ENCODE measurements at regions of chr1 and their contacts with region 1.

Region 1: DNA sequence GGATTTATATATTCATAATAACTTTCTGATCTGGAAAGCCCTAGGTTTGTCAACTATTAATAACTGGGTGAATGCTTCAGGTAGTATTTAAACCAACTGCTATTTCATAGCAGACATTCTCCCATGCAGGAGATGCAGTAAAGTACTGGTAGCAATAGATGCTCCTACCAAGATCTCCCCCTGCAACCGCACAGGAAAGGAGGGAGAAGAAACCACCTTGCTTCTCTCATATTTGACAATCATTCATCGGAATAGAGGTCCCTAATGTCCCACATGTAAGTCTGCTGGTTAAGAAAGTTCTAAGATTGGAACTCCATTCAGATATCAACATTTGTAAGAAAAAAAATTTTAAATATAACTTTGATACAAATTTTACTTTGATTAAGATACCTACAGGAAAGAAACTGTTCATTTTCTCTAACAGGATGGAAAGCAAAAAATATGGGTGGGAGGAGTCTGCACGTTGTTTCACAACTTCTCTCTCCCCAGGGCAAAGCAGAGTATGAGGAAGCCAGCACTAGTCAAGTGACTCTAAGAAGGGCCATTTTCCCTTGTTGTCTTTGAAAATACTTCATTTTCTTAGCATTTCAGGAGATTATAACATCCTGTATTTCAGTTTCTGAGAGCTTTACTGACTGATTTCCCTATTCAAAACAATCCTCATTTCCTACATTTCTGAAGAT is at the start of gene PYHIN1:
- DNase-seq: peak; percentile 37
- H3K4me3 Mint-ChIP-seq: peak within 1 kb of the TSS; percentile 75
- H3K27ac Mint-ChIP-seq: peak within 1 kb of the TSS; percentile 86
- H3K4me1 Mint-ChIP-seq: peaks cover 35% of the 10 kb centered on the region
- H3K27me3 Mint-ChIP-seq: peaks cover 6% of the 10 kb centered on the region
- total RNA-seq, gene PYHIN1: 4.1 to 4.4 TPM

Region 2: DNA sequence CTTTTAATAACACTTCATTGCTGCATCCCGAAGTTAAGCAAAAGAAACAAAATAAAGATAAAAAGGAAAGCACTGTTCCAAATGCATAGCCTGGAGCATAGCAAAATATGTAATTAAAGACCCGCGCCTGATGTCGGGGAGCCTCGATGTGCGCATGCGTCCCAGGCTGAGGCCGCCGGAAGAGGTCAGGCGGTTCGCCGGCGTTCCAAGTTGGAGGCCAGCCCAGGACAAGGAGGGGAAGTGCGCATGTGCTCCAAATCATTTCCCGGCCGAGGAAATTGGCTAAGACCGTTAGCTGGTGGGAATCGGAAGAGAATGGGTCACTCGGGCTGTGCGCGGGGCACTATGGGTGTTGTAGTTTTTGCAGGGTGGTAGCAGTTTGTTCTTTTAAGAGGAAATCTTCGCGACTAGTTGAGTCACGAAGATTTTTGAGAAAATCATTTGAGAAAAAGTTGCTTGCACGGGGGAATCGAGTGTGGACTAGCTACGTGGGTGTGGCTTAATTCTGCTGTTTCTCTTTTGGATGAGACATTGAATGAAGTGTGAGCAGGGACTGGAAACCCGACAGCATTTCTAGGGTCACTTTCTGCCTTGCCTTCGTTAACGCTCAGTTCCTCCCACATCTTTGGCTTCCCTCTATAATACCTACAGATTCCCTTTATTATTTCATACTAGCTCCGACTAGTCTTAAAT is 781.5 kb before region 1 on chr1:
- CTCF ChIA-PET with region 1: no interaction called
- intact Hi-C with region 1: loop called (anchors 5 kb)
- DNase-seq: peak; percentile 84
- H3K4me3 Mint-ChIP-seq: peak overlapping the region; percentile 77
- H3K27ac Mint-ChIP-seq: peak overlapping the region; percentile 77
- H3K4me1 Mint-ChIP-seq: peaks cover 19% of the 10 kb centered on the region
- H3K27me3 Mint-ChIP-seq: no peaks in the 10 kb centered on the region

Region 3: GRCh38 chr1:158809862-158810261 is 121.3 kb before region 1 on chr1:
- CTCF ChIA-PET with region 1: no interaction called
- intact Hi-C with region 1: no loop called
- DNase-seq: no peak
- H3K4me3 Mint-ChIP-seq: no peak overlapping the region
- H3K27ac Mint-ChIP-seq: no peak overlapping the region
- H3K4me1 Mint-ChIP-seq: no peaks in the 10 kb centered on the region
- H3K27me3 Mint-ChIP-seq: peaks cover 2% of the 10 kb centered on the region

Region 4: GRCh38 chr1:158945061-158945460 is 13.9 kb after region 1 on chr1:
- CTCF ChIA-PET with region 1: no interaction called
- intact Hi-C with region 1: no loop called
- DNase-seq: no peak
- H3K4me3 Mint-ChIP-seq: no peak overlapping the region
- H3K27ac Mint-ChIP-seq: no peak overlapping the region
- H3K4me1 Mint-ChIP-seq: peaks cover 6% of the 10 kb centered on the region
- H3K27me3 Mint-ChIP-seq: no peaks in the 10 kb centered on the region

Region 5: GRCh38 chr1:158961178-158961577 is 30.0 kb after region 1 on chr1:
- CTCF ChIA-PET with region 1: no interaction called
- intact Hi-C with region 1: loop called (anchors 2 kb)
- DNase-seq: no peak
- H3K4me3 Mint-ChIP-seq: no peak overlapping the region
- H3K27ac Mint-ChIP-seq: no peak overlapping the region
- H3K4me1 Mint-ChIP-seq: peaks cover 6% of the 10 kb centered on the region
- H3K27me3 Mint-ChIP-seq: peaks cover 3% of the 10 kb centered on the region